Sciatic nerve (tissue), 2 donors: ENCODE measurements at regions of chr6 and their contacts with region 1.

Region 1: DNA sequence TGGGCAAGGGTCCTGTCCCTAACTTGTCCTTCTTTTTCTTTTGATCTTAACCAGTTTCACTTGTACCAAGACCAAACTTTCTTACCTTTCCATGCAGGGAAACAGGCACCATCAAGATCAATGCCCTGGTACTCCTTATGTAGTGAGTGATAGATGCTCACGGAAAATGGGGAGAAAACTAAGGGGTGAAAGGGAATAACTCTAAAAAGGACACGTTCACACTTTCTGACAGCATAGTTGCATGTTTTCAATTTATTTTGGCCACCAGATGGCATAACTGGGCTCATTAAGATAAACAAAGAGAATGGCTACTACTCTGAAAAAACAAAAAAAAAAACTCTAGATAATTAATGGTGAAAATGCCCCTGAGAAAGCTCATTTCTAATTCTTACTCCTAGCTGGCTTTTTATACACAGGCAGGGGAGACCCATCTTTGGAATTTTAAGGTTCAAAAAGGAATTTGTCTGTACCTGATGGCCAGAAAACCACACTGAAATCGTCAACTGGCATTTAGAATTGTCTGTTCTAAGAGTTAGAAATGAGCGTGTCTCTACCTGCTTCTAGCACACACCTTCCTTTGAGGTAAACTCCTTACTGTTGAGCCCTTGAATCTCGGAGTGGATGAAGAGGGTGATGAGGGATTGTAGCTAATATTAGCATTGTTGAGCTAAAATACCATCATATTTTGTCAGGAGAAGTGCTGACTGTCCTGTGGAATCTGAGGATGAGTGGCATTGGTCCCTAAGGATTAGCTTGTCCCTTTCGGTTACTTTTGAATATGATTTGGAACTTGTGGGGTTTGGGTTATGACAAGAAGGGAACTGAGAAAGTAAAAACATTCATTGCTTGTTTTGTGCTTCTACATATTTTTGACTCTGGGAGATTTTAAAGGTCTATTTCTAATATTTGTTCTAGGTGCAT is 62.2 kb upstream of the DDR1 start:
- DNase-seq: no peak
- ATAC-seq: no peak

Region 2: DNA sequence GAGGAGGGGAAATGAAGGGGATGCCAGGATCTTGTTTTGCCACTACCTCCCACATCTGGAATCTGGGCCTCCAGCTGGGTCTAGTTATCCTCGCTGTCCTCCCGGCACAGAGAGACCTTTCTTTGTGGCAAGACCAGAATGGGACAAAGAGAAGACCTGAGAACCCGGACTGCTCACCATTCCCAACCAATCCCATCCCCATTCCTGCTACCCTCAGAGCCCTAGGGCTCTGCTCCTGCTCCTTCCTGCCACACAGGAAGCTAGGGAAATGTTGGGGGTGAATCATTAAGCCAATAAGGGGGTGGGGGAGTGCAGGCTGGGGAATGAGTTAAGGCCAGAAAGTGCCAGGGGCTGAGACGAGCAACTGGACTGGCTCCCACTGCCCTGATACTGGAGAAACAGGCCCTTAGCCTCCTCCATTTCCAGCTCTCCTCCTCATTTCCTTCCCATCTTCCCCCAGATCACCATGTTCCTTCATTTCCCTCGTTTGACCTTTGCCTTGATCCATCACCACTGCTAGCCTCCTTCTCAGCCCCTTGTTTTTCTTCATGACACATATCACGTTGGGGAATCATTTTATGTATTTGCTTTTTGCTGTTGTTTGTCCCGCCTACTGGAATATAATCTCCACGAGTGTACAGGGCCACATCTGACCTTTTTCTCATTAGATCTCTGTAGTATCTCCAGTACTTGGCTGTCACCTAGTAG is 73.1 kb before region 1 on chr6:
- intact Hi-C with region 1: loop called (anchors 5 kb)
- DNase-seq: no peak
- ATAC-seq: no peak